Heart right ventricle (tissue), 16 donors: ENCODE measurements at regions of chrX and their contacts with region 1.

Region 1: DNA sequence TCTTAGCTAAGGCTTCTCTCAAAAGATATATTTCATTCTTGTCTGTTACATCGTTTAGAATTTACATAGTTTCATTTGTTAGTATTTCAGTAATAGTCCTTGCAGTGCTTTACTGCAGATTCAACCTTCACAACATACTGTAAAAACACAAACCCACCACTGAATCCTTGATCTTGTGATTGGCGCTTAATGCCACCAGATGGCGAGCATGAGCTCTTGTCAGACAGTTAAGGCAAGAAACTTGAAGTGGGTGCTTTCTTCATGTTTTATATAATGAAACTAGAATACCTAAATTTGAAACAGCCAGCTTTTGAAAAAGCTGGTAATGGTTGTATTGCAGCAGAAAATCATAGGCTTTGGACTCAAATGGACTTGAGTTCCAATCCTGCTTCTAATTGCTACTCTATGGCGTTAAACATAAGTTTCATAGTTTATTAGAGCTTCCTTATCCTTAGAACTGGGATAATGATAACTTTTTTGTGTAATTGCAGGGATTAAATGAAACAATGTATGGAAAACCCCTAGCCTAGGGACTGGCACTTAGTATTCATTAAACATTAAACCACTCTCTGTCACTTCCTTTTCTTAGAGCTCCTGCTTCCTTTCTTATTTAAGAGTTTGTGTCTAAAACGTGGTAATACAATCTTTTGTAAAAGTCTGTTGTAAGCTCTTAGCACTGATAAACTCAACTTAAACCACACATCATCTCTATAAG is 95.1 kb downstream of the USP9X start:
- DNase-seq: peak in 1 of 2 donors; percentile 10
- ATAC-seq: no peak
- H3K4me3 ChIP-seq: no peak overlapping the region
- H3K27ac ChIP-seq: no peak overlapping the region
- H3K4me1 ChIP-seq: peaks cover 0 to 13% (median 6%) of the 10 kb centered on the region in 9 donors
- H3K27me3 ChIP-seq: no peaks in the 10 kb centered on the region
- CTCF ChIP-seq: peak in 8 of 9 donors; percentile 37 to 81 (median 66)

Region 2: DNA sequence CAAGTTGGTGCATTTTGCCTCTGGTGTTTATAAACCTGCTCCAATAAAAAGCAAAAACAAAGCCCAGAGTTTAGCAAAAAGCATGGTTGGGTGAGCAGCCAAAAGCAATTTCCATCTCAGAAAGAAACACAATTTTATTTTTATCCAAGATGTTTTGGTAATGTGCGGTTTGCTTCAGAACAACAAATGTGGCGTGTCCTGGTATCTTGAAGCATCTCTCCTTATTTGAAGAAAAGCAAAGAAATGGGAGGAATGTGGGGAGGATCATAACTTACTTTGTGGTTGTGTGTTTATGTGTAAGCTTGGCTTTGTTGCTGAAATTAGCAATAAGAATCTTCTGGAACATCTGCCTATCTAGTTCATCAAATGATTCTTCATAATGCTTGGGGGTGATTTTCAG is 65.3 kb after region 1 on chrX:
- intact Hi-C with region 1: loop called in 2 of 10 experiments (anchors 10 kb)
- DNase-seq: no peak
- ATAC-seq: no peak
- H3K4me3 ChIP-seq: no peak overlapping the region
- H3K27ac ChIP-seq: no peak overlapping the region
- H3K4me1 ChIP-seq: no peaks in the 10 kb centered on the region
- H3K27me3 ChIP-seq: peaks cover 0 to 50% (median 0%) of the 10 kb centered on the region in 7 donors
- CTCF ChIP-seq: no peak

Region 3: GRCh38 chrX:41259516-41259915 is 79.2 kb after region 1 on chrX:
- intact Hi-C with region 1: loop called in 1 of 10 experiments (anchors 10 kb)
- DNase-seq: no peak
- ATAC-seq: no peak
- H3K4me3 ChIP-seq: no peak overlapping the region
- H3K27ac ChIP-seq: no peak overlapping the region
- H3K4me1 ChIP-seq: no peaks in the 10 kb centered on the region
- H3K27me3 ChIP-seq: peaks cover 0 to 43% (median 0%) of the 10 kb centered on the region in 7 donors
- CTCF ChIP-seq: no peak